Psoas muscle (tissue), 8 donors: ENCODE measurements at regions of chr2 and their contacts with region 1.

Region 1: DNA sequence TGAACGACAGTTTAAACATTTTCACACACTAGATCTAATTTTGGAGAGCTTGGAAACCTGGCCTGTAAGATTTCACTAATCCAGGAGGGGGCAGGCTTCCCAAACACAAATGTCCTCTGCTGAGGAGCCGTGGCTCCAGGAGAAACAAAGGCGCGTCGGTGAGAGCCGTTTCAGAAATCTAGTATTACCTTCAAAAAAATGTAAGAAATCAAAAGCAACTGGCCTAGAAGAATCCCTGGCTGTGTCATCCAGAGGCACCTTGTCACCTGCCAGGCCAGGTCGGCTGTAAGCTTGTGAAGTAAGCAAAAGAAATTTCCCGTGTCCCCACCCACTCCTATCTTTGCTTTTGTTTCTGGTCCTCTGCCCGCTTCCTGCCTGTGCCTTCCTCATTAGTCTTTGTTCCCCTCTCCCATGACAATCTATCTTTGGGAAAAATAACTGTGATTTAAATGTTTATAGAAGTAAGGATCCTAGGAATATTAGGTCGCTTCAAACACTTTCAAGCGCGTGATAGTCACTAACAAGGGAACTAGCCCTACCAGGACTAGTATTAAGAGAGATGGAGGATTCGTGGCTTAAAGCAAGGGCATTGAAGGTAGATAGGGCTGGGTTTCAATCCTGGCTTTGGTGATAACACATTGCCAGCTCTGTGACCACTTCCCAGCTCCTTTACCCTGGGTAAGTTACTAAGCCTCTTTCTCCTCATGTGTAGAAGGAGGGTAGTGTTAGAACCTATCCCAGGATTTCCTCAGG is 99.5 kb upstream of the STK39 start:
- DNase-seq: peak; percentile 39 to 64
- ATAC-seq: peak; percentile 81 to 97 (median 86)
- H3K4me3 ChIP-seq: peak overlapping the region; percentile 67
- H3K27ac ChIP-seq: no peak overlapping the region
- H3K4me1 ChIP-seq: no peaks in the 10 kb centered on the region
- H3K27me3 ChIP-seq: no peaks in the 10 kb centered on the region
- CTCF ChIP-seq: peak; percentile 86

Region 2: DNA sequence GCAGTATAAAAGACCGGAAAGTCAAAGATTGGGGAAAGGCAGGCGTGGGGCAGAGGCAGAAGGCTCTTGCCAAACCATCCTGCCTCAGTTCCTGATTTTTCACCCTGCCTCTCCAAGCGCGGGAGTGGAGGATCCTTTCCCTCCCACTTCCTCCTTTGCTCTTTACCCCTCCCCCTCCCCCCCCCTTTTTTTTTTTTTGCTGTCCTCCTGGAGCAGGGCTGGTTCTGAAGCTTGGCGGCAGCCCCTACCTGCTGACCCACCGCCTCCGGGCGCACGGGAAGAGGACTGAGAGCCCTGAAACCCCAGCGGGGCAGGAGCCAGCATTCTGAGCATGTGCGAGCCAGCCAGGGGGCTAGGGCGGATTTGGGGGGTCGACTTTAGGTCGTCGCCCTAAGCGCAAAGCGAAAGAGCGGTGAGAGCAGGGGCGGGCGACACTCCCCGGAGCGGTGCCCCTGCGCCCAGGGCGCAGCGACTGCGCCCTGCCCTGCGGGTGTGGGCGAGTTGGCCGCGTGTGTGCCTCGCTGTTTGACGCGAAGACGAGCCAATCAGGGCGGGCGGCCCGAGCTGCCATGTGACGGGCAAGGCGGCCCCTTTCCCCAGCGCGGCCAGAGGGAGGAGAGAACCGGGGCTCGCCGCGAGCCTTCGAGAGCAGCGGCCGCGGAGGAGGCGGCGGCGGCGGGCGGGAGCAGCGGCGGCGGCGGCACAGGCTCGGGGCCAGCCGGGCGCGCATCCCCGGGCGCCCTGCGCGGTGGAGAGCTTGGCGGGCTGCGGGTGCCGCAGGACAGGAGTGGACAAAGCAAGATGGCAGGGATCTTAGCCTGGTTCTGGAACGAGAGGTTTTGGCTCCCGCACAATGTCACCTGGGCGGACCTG is 109.0 kb after region 1 on chr2 and contains the start of gene CERS6:
- intact Hi-C with region 1: loop called in 1 of 2 experiments (anchors 5 kb)
- DNase-seq: peak; percentile 97 to 98
- ATAC-seq: peak; percentile 98 to 99 (median 99)
- H3K4me3 ChIP-seq: peak within 1 kb of the TSS; percentile 98
- H3K27ac ChIP-seq: peak within 1 kb of the TSS; percentile 88
- H3K4me1 ChIP-seq: peaks cover 15% of the 10 kb centered on the region
- H3K27me3 ChIP-seq: no peaks in the 10 kb centered on the region
- CTCF ChIP-seq: no peak
- total RNA-seq, gene CERS6: 11.2 to 18.1 (median 13.5) TPM

Region 3: DNA sequence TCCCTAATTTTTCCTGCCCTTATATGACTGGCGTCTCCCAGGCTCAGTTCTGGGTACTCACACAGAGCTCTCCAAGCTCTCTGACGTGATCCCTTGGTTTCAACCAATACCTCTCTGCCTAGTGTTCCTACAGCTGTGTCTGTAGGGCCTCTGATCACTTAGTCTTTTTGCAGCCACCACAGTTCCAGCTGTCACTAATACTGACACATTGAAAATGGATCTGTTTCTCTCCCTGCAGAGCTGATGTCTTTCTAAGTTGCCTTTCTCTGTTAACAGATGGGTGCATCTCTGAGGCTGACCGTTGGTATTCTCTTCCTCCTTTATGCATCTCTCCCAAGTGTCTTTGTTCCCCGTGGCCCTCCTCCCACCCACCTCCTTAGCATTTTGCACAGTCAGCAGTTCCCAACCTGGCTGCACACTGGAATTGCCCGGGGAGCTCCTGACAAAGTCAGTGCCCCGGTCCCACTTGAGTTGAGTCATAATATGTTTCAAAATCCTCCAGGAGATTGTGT is 171.7 kb after region 1 on chr2:
- intact Hi-C with region 1: no loop called
- DNase-seq: no peak
- ATAC-seq: peak; percentile 62 to 77 (median 66)
- H3K4me3 ChIP-seq: no peak overlapping the region
- H3K27ac ChIP-seq: peak overlapping the region; percentile 21
- H3K4me1 ChIP-seq: peaks cover 53% of the 10 kb centered on the region
- H3K27me3 ChIP-seq: no peaks in the 10 kb centered on the region
- CTCF ChIP-seq: no peak

Region 4: DNA sequence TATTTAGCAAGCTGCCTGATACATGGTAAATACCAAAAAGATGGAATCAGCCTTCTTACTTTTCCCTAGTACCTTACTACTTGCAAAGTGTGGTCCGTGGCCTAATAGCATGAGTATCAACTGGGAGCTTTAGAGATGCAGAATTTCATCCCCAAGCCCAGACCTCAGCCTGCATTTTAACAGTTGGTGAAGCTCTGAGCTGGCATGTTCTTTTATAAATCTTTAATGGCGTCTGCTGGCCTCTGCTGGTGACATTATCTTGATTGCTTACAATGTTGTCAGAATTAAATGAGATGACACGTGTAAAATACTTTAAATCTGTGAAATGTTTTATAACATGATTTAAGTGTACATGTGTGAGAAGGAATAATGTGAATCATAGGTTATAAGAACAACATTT is 340.4 kb after region 1 on chr2:
- intact Hi-C with region 1: loop called (anchors 2 to 5 kb)
- DNase-seq: no peak
- ATAC-seq: peak in 3 of 4 donors; percentile 56 to 75 (median 61)
- H3K4me3 ChIP-seq: no peak overlapping the region
- H3K27ac ChIP-seq: no peak overlapping the region
- H3K4me1 ChIP-seq: peaks cover 7% of the 10 kb centered on the region
- H3K27me3 ChIP-seq: no peaks in the 10 kb centered on the region
- CTCF ChIP-seq: peak; percentile 47

Region 5: GRCh38 chr2:168758970-168759820 is 412.3 kb after region 1 on chr2:
- intact Hi-C with region 1: loop called (anchors 1 to 2 kb)
- DNase-seq: no peak
- ATAC-seq: peak; percentile 76 to 91 (median 84)
- H3K4me3 ChIP-seq: no peak overlapping the region
- H3K27ac ChIP-seq: no peak overlapping the region
- H3K4me1 ChIP-seq: peaks cover 6% of the 10 kb centered on the region
- H3K27me3 ChIP-seq: no peaks in the 10 kb centered on the region
- CTCF ChIP-seq: peak; percentile 60

Region 6: GRCh38 chr2:168920504-168921157 is 573.7 kb after region 1 on chr2:
- intact Hi-C with region 1: loop called (anchors 5 kb)
- DNase-seq: no peak
- ATAC-seq: peak in 2 of 4 donors; percentile 49 to 64
- H3K4me3 ChIP-seq: no peak overlapping the region
- H3K27ac ChIP-seq: no peak overlapping the region
- H3K4me1 ChIP-seq: no peaks in the 10 kb centered on the region
- H3K27me3 ChIP-seq: no peaks in the 10 kb centered on the region
- CTCF ChIP-seq: peak; percentile 72